ENCODE measurements at regions of chr7 and their contacts with region 1.

Region 1: GRCh38 chr7:1193593-1194424 is 33.8 kb upstream of the ZFAND2A start:
- DNase-seq: no peak
- H3K4me3 ChIP-seq: no peak overlapping the region
- H3K27ac ChIP-seq: no peak overlapping the region
- H3K27me3 ChIP-seq: peaks cover 3% of the 10 kb centered on the region
- CTCF ChIP-seq: peak; percentile 43

Region 2: DNA sequence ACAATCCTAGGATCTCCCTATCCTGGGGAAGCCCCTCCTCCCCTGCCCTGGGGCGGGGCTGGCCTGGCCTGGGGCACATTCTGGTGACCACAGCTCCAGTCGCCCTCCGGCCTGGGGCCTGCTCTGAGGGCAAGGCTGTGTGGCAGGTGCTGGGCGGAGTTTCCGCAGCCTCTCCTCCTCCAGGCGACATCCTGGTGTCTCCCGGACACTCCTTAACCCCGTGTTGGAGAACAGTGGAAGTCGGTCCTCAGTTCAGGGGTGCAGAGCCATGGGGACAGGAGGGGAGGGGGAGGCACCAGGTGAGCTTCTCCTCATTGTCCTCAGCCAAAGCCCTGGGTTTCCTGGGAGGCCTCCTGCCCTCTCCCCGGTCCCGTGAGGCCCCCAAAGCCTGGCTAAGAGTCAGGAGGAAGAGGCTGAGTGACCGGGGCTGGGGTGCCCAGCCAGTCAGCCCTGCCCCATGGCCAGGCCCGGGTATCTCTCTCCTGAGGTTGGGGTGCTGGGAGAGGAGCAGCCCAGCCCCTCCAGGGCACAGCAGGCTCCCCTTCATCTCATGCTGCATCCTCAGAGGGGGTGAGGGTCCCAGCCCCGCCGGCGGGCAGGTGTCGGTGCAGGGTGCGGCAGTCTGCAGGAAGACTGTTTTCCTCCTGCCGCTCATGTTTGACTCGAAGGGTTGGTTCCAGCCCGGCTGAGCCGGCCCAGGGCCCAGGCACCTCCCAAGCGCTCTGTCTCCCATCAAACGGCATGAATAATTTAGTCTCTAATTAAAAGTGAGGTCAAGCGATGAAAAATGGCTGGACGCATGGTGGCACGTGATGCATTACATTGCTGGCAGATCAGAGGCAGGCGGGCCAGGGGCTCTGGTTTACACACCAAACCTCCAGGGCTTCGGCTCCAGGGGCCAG is 61.6 kb after region 1 on chr7:
- CTCF ChIA-PET with region 1: no interaction called
- POLR2A ChIA-PET with region 1: no interaction called
- DNase-seq: no peak
- H3K4me3 ChIP-seq: no peak overlapping the region
- H3K27ac ChIP-seq: no peak overlapping the region
- H3K27me3 ChIP-seq: peaks cover 71% of the 10 kb centered on the region
- CTCF ChIP-seq: no peak

Region 3: GRCh38 chr7:1432411-1433082 is 238.7 kb after region 1 on chr7:
- CTCF ChIA-PET with region 1: interaction called, 32 read pairs
- POLR2A ChIA-PET with region 1: no interaction called
- DNase-seq: no peak
- H3K4me3 ChIP-seq: no peak overlapping the region
- H3K27ac ChIP-seq: no peak overlapping the region
- H3K27me3 ChIP-seq: no peaks in the 10 kb centered on the region
- CTCF ChIP-seq: peak; percentile 94

Measured in AG04450 (cell line).